Ascending aorta (tissue), 2 donors: ENCODE measurements at regions of chr14 and their contacts with region 1.

Region 1: DNA sequence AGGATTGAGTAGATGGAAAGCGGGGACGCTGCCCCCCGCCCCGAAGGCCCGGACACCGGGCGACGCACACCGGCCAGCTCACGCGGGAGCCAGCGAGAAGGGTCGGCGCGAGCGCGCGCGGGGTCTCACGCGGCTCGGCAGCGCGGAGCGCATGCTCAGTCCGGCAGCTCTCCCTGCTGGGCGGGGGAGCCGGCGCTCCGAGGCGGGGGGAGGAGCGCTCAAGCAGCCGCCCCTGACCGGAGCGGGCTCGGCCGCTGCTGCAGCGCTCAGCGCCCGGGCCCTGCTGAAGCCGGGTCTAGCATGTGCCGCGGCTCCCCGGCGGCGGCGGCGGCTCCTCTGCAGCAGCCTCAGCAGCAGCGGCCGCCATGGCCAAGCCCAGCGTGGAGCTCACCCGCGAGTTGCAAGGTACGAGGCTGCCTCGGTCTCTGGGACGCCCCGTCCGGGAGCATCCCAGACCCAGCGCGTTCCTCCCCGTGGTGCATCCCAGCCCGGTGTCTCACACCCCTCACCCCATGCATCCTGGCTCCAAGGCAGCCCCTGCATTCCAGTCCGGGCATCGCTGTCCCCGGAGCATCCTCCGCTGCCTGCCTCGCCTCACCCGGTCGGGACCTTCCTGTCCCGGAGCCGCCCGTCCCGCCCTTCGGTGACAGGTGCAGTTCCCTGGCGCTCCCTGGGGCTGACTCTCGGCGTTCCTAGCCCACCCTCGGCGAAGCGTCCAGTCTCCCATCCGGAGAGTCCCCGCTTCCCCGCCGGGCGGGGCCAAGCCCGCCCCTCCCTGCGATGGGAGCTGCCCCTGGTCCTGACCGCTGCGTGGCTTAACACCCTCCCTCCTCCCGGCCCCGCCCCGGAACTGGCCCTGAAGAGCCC is at the start of gene CARMIL3:
- DNase-seq: no peak
- H3K4me3 ChIP-seq: peak within 1 kb of the TSS; percentile 61 to 81
- H3K27ac ChIP-seq: no peak within 1 kb of the TSS
- H3K4me1 ChIP-seq: peaks cover 9 to 12% of the 10 kb centered on the region in 2 donors
- H3K27me3 ChIP-seq: no peaks in the 10 kb centered on the region
- CTCF ChIP-seq: no peak
- total RNA-seq, gene CARMIL3: not detected

Region 2: DNA sequence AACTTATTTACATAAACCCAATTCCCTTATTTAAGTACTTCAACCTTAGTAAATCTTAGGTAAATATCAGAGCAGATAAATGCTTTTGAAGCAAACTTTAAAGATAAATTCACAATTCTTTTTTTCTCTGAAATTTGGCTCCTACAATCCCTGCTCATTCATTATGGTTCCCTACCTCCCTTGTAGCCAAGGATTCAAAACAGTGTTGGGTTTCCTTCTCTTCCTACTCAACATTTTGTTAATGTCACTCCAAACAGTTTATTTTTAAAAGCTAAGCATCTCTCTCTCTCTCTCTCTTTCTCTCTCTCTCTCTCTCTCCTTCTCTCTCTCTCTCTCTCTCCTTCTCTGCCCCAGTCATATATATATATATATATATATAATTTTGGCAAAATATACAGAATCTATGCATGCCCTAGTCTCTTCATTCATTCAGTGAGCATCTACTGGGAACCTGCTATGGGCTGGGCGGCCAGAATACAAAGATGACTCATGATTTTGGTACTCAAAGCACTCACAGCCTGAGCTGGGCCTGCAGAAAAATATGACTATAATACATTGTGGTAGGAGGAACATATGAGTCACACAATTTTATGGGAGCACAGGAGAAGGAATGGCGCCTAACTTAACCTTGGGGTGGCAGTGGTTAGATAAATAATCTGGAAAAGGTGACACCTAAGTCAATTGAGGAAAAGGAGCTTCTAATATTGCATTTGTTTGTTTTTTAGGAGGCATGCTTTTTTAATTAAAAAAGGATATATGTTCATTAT is 222.1 kb before region 1 on chr14:
- intact Hi-C with region 1: no loop called
- DNase-seq: no peak
- H3K4me3 ChIP-seq: no peak overlapping the region
- H3K27ac ChIP-seq: peak overlapping the region in 1 of 2 donors; percentile 38
- H3K4me1 ChIP-seq: peaks cover 0 to 3% of the 10 kb centered on the region in 2 donors
- H3K27me3 ChIP-seq: no peaks in the 10 kb centered on the region
- CTCF ChIP-seq: no peak

Region 3: GRCh38 chr14:23942387-23942986 is 109.5 kb before region 1 on chr14:
- intact Hi-C with region 1: no loop called
- DNase-seq: no peak
- H3K4me3 ChIP-seq: no peak overlapping the region
- H3K27ac ChIP-seq: no peak overlapping the region
- H3K4me1 ChIP-seq: no peaks in the 10 kb centered on the region
- H3K27me3 ChIP-seq: no peaks in the 10 kb centered on the region
- CTCF ChIP-seq: no peak

Region 4: GRCh38 chr14:24013654-24014514 is 38.1 kb before region 1 on chr14:
- intact Hi-C with region 1: loop called (anchors 2 kb)
- DNase-seq: no peak
- H3K4me3 ChIP-seq: no peak overlapping the region
- H3K27ac ChIP-seq: no peak overlapping the region
- H3K4me1 ChIP-seq: peaks cover 0 to 4% of the 10 kb centered on the region in 2 donors
- H3K27me3 ChIP-seq: no peaks in the 10 kb centered on the region
- CTCF ChIP-seq: peak; percentile 74 to 93 (median 82)

Region 5: GRCh38 chr14:24113801-24114535 is 61.9 kb after region 1 on chr14:
- intact Hi-C with region 1: no loop called
- DNase-seq: peak; percentile 69 to 96
- H3K4me3 ChIP-seq: peak overlapping the region; percentile 78 to 79
- H3K27ac ChIP-seq: peak overlapping the region; percentile 98 to 100
- H3K4me1 ChIP-seq: peaks cover 9 to 18% of the 10 kb centered on the region in 2 donors
- H3K27me3 ChIP-seq: no peaks in the 10 kb centered on the region
- CTCF ChIP-seq: no peak